ENCODE measurements at regions of chr1 and their contacts with region 1.

Region 1: GRCh38 chr1:18597160-18598042 is 33.2 kb upstream of the PAX7 start:
- DNase-seq: peak; percentile 22 to 89 (median 66)
- ATAC-seq: peak; percentile 82 to 94 (median 90)
- H3K4me3 ChIP-seq: no peak overlapping the region
- H3K27ac ChIP-seq: no peak overlapping the region
- H3K4me1 ChIP-seq: no peaks in the 10 kb centered on the region
- H3K27me3 ChIP-seq: peaks cover 0 to 4% (median 0%) of the 10 kb centered on the region in 4 donors
- CTCF ChIP-seq: peak; percentile 68 to 96 (median 93)

Region 2: GRCh38 chr1:18875107-18875795 is 277.9 kb after region 1 on chr1:
- intact Hi-C with region 1: loop called in 2 of 3 experiments (anchors 5 kb)
- DNase-seq: peak; percentile 57 to 94 (median 86)
- ATAC-seq: peak; percentile 74 to 91 (median 86)
- H3K4me3 ChIP-seq: no peak overlapping the region
- H3K27ac ChIP-seq: no peak overlapping the region
- H3K4me1 ChIP-seq: no peaks in the 10 kb centered on the region
- H3K27me3 ChIP-seq: no peaks in the 10 kb centered on the region
- CTCF ChIP-seq: peak in 3 of 4 donors; percentile 80 to 94 (median 85)

Region 3: DNA sequence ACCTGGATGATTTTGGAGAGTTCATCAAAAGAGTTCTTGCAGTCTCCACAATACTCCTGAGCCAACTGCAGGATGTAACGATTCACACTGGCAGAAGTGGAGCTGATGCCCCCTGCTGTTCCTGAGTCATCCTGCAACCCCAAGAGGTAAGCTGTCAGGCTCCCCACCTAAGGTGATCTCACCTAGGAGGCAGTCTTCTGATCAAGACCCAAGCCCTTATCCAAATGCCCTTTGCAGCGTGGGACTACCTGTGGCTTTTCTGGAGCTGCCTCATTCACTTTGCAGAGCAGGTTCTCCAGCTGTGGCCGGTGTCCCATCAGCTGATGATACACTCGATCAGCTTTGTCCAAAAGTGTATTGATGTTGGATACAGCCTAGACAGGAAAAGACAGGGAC is 516.3 kb after region 1 on chr1:
- intact Hi-C with region 1: loop called in 1 of 3 experiments (anchors 10 kb)
- DNase-seq: peak in 1 of 6 donors; percentile 45
- ATAC-seq: peak; percentile 48 to 86 (median 76)
- H3K4me3 ChIP-seq: no peak overlapping the region
- H3K27ac ChIP-seq: no peak overlapping the region
- H3K4me1 ChIP-seq: no peaks in the 10 kb centered on the region
- H3K27me3 ChIP-seq: no peaks in the 10 kb centered on the region
- CTCF ChIP-seq: peak in 3 of 4 donors; percentile 7 to 37 (median 28)

Measured in pancreas (tissue), 10 donors.